CD4-positive, alpha-beta memory T cell (primary cell): ENCODE measurements at regions of chr1 and their contacts with region 1.

Region 1: GRCh38 chr1:43367904-43368645 is at the start of gene ELOVL1:
- DNase-seq: peak; percentile 70 to 82 (median 74)
- H3K4me3 ChIP-seq: peak within 1 kb of the TSS; percentile 68 to 76
- H3K4me3 Mint-ChIP-seq: peak within 1 kb of the TSS; percentile 87 to 94 (median 90)
- H3K27ac ChIP-seq: peak within 1 kb of the TSS; percentile 81
- H3K27ac Mint-ChIP-seq: peak within 1 kb of the TSS; percentile 87 to 96 (median 93)
- H3K4me1 ChIP-seq: peaks cover 24% of the 10 kb centered on the region
- H3K4me1 Mint-ChIP-seq: peaks cover 25 to 51% (median 38%) of the 10 kb centered on the region in 4 donors
- H3K27me3 ChIP-seq: no peaks in the 10 kb centered on the region
- H3K27me3 Mint-ChIP-seq: no peaks in the 10 kb centered on the region
- total RNA-seq, gene ELOVL1: 45.3 to 46.0 TPM

Region 2: GRCh38 chr1:42993631-42994121 is 374.4 kb before region 1 on chr1:
- CTCF ChIA-PET with region 1: no interaction called
- POLR2A ChIA-PET with region 1: no interaction called
- intact Hi-C with region 1: no loop called
- DNase-seq: no peak
- H3K4me3 ChIP-seq: no peak overlapping the region
- H3K4me3 Mint-ChIP-seq: no peak overlapping the region
- H3K27ac ChIP-seq: no peak overlapping the region
- H3K27ac Mint-ChIP-seq: peak overlapping the region in 1 of 7 donors; percentile 9
- H3K4me1 ChIP-seq: no peaks in the 10 kb centered on the region
- H3K4me1 Mint-ChIP-seq: no peaks in the 10 kb centered on the region
- H3K27me3 ChIP-seq: no peaks in the 10 kb centered on the region
- H3K27me3 Mint-ChIP-seq: peaks cover 0 to 1% of the 10 kb centered on the region in 2 donors

Region 3: DNA sequence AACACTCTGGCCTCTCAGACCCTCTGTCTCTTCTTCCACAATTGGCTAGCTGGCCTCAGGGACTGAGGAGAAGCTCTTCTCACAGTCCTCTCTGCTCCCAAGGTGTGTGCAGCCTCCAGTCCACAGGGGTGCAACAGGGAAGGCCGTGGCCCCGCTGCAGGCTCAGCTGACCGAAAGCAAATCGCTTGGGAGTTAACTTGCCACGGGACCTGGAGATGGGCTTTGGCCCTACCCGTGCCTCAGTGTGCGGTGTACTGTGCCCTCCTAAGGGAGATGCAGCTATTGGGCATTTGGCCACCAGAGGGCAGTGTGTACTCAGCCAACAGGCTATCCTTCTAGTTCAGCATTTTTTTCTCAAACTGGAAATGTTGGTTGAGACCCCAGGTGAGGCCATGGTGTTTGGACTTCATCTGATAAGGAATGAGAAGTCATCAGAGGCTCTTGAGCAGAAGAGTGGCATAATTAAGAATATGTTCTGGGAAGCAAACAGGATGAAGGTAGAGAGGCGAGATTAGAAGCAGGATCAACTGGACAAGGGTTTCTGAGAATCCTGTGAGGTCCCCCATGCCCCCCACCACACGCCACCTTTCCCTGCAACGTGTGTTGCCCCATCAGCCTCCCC is 140.8 kb before region 1 on chr1:
- CTCF ChIA-PET with region 1: interaction called, 3 read pairs
- POLR2A ChIA-PET with region 1: no interaction called
- intact Hi-C with region 1: loop called (anchors 1 kb)
- DNase-seq: peak; percentile 68 to 75 (median 72)
- H3K4me3 ChIP-seq: no peak overlapping the region
- H3K4me3 Mint-ChIP-seq: no peak overlapping the region
- H3K27ac ChIP-seq: no peak overlapping the region
- H3K27ac Mint-ChIP-seq: peak overlapping the region in 2 of 7 donors; percentile 18 to 53
- H3K4me1 ChIP-seq: no peaks in the 10 kb centered on the region
- H3K4me1 Mint-ChIP-seq: no peaks in the 10 kb centered on the region
- H3K27me3 ChIP-seq: no peaks in the 10 kb centered on the region
- H3K27me3 Mint-ChIP-seq: peaks cover 0 to 9% of the 10 kb centered on the region in 2 donors

Region 4: DNA sequence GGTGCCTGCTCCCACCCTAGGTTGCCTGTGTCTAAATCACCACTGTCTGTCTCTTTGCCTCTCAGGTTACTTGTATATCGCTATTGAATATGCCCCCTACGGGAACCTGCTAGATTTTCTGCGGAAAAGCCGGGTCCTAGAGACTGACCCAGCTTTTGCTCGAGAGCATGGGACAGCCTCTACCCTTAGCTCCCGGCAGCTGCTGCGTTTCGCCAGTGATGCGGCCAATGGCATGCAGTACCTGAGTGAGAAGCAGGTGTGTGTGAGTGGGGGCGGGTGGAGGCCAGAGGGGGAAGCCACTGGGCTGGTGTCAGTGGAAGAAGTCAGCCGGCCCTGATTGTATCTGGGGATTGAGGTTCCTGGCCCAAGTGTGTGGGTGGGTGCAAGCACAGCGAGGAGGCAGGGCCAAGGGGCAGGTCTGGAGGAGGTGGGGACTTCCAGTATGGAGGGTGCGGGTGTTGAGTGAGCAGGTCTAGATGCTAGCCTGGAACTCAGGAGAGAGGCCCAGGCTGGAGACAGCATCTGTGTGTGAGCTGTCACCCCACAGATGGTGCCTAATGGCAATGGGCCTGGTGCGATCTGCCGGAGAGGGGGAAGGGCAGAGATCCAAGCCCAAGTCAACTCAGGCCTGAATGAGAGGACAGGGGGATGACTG is 50.1 kb before region 1 on chr1:
- CTCF ChIA-PET with region 1: no interaction called
- POLR2A ChIA-PET with region 1: no interaction called
- intact Hi-C with region 1: no loop called
- DNase-seq: no peak
- H3K4me3 ChIP-seq: no peak overlapping the region
- H3K4me3 Mint-ChIP-seq: peak overlapping the region in 1 of 8 donors; percentile 46
- H3K27ac ChIP-seq: no peak overlapping the region
- H3K27ac Mint-ChIP-seq: no peak overlapping the region
- H3K4me1 ChIP-seq: no peaks in the 10 kb centered on the region
- H3K4me1 Mint-ChIP-seq: no peaks in the 10 kb centered on the region
- H3K27me3 ChIP-seq: no peaks in the 10 kb centered on the region
- H3K27me3 Mint-ChIP-seq: no peaks in the 10 kb centered on the region

Region 5: GRCh38 chr1:43348809-43349583 is 19.1 kb before region 1 on chr1:
- CTCF ChIA-PET with region 1: no interaction called
- POLR2A ChIA-PET with region 1: interaction called, 10 read pairs
- intact Hi-C with region 1: loop called (anchors 1 kb)
- DNase-seq: peak; percentile 61 to 86 (median 77)
- H3K4me3 ChIP-seq: peak overlapping the region in 1 of 2 donors; percentile 36
- H3K4me3 Mint-ChIP-seq: peak overlapping the region; percentile 61 to 89 (median 84)
- H3K27ac ChIP-seq: peak overlapping the region; percentile 49
- H3K27ac Mint-ChIP-seq: peak overlapping the region; percentile 81 to 99 (median 93)
- H3K4me1 ChIP-seq: peaks cover 5% of the 10 kb centered on the region
- H3K4me1 Mint-ChIP-seq: peaks cover 3 to 11% (median 11%) of the 10 kb centered on the region in 4 donors
- H3K27me3 ChIP-seq: no peaks in the 10 kb centered on the region
- H3K27me3 Mint-ChIP-seq: peaks cover 0 to 2% of the 10 kb centered on the region in 2 donors

Region 6: DNA sequence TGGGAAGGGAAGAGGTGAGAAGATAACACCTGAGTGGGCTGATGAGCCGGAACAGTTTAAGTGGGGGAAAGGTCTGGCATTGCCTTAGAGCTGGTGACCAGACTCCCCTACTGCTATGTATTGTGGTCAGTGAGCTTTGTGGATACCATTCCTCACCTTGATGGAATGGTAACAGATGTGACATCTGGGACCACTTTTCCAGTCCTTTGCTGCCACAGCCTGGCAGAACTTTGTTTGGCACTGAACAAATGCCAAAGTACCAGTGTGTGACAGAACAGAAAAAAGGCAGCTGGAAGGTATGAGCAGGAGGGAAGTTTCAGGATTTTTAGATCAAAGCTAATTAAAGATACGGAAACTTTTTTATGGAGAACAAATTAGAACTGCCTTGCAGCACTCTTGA is 15.4 kb after region 1 on chr1:
- CTCF ChIA-PET with region 1: interaction called, 3 read pairs
- POLR2A ChIA-PET with region 1: interaction called, 42 read pairs
- intact Hi-C with region 1: no loop called
- DNase-seq: no peak
- H3K4me3 ChIP-seq: no peak overlapping the region
- H3K4me3 Mint-ChIP-seq: no peak overlapping the region
- H3K27ac ChIP-seq: no peak overlapping the region
- H3K27ac Mint-ChIP-seq: peak overlapping the region in 1 of 7 donors; percentile 4
- H3K4me1 ChIP-seq: peaks cover 6% of the 10 kb centered on the region
- H3K4me1 Mint-ChIP-seq: peaks cover 7 to 22% (median 9%) of the 10 kb centered on the region in 4 donors
- H3K27me3 ChIP-seq: no peaks in the 10 kb centered on the region
- H3K27me3 Mint-ChIP-seq: no peaks in the 10 kb centered on the region

Region 7: GRCh38 chr1:43389326-43390313 is 21.5 kb after region 1 on chr1 and contains the starts of genes MED8 and SZT2:
- CTCF ChIA-PET with region 1: interaction called, 7 read pairs
- POLR2A ChIA-PET with region 1: interaction called, 42 read pairs
- intact Hi-C with region 1: loop called (anchors 1 kb)
- DNase-seq: peak; percentile 88 to 93 (median 91)
- H3K4me3 ChIP-seq: peak within 1 kb of the TSS; percentile 87 to 88
- H3K4me3 Mint-ChIP-seq: peak within 1 kb of the TSS; percentile 99 to 100 (median 100)
- H3K27ac ChIP-seq: peak within 1 kb of the TSS; percentile 82
- H3K27ac Mint-ChIP-seq: peak within 1 kb of the TSS; percentile 89 to 100 (median 99)
- H3K4me1 ChIP-seq: peaks cover 28% of the 10 kb centered on the region
- H3K4me1 Mint-ChIP-seq: peaks cover 32 to 60% (median 45%) of the 10 kb centered on the region in 4 donors
- H3K27me3 ChIP-seq: no peaks in the 10 kb centered on the region
- H3K27me3 Mint-ChIP-seq: no peaks in the 10 kb centered on the region
- total RNA-seq, gene MED8: 34.0 to 35.6 TPM
- total RNA-seq, gene SZT2: 135 to 153 TPM

Region 8: GRCh38 chr1:43454266-43455011 is 86.4 kb after region 1 on chr1:
- CTCF ChIA-PET with region 1: no interaction called
- POLR2A ChIA-PET with region 1: interaction called, 14 read pairs
- intact Hi-C with region 1: loop called (anchors 5 kb)
- DNase-seq: peak; percentile 65 to 78 (median 68)
- H3K4me3 ChIP-seq: peak overlapping the region; percentile 10 to 36
- H3K4me3 Mint-ChIP-seq: peak overlapping the region; percentile 88 to 92 (median 89)
- H3K27ac ChIP-seq: peak overlapping the region; percentile 4
- H3K27ac Mint-ChIP-seq: peak overlapping the region; percentile 70 to 93 (median 89)
- H3K4me1 ChIP-seq: peaks cover 12% of the 10 kb centered on the region
- H3K4me1 Mint-ChIP-seq: peaks cover 12 to 29% (median 21%) of the 10 kb centered on the region in 4 donors
- H3K27me3 ChIP-seq: no peaks in the 10 kb centered on the region
- H3K27me3 Mint-ChIP-seq: peaks cover 0 to 4% of the 10 kb centered on the region in 2 donors